Panc1 (cell line): ENCODE measurements at regions of chr11 and their contacts with region 1.

Region 1: DNA sequence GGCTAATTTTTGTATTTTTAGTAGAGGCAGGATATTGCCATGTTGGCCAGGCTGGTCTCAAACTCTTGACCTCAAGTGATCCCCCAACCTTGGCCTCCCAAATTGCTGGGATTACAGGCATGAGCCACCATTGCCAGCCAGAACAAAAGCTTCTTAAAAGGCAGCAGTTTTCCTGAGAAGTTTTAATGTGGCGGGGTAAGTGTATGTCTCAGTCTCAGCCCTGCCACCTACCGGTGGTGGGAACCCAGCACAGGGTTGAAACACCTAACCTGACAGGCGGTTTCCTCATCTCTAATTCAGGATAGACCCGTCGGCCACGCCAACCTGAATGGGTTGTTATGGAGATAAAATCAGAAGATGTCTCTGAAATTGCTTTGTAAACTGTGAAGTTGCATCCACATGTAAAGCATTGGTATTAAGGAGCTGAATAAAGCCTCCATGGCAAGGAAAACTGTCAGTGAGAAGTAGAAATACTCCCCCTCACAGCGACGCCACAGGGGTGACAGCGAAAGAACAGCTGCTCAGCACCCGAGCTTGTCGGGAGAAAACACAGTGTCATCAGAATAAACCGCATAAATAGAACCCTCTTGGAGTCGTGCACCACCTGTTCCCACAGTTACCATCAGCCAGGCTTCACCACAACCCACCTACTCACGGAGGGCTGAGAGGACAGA is 165.9 kb upstream of the NCAM1 start:
- DNase-seq: peak; percentile 17
- ATAC-seq: peak; percentile 93
- H3K4me3 ChIP-seq: no peak overlapping the region
- H3K27ac ChIP-seq: no peak overlapping the region
- H3K4me1 ChIP-seq: no peaks in the 10 kb centered on the region
- H3K27me3 ChIP-seq: peaks cover 10% of the 10 kb centered on the region; the same call in 1 of the 2 replicates
- CTCF ChIP-seq: peak; percentile 91

Region 2: GRCh38 chr11:111148121-111148520 is 1647.2 kb before region 1 on chr11:
- CTCF ChIA-PET with region 1: no interaction called
- POLR2A ChIA-PET with region 1: interaction called, 12 read pairs
- in situ Hi-C with region 1: no loop called
- intact Hi-C with region 1: no loop called
- DNase-seq: no peak
- ATAC-seq: no peak
- H3K4me3 ChIP-seq: no peak overlapping the region
- H3K27ac ChIP-seq: no peak overlapping the region
- H3K4me1 ChIP-seq: no peaks in the 10 kb centered on the region
- H3K27me3 ChIP-seq: no peaks in the 10 kb centered on the region
- CTCF ChIP-seq: no peak

Region 3: DNA sequence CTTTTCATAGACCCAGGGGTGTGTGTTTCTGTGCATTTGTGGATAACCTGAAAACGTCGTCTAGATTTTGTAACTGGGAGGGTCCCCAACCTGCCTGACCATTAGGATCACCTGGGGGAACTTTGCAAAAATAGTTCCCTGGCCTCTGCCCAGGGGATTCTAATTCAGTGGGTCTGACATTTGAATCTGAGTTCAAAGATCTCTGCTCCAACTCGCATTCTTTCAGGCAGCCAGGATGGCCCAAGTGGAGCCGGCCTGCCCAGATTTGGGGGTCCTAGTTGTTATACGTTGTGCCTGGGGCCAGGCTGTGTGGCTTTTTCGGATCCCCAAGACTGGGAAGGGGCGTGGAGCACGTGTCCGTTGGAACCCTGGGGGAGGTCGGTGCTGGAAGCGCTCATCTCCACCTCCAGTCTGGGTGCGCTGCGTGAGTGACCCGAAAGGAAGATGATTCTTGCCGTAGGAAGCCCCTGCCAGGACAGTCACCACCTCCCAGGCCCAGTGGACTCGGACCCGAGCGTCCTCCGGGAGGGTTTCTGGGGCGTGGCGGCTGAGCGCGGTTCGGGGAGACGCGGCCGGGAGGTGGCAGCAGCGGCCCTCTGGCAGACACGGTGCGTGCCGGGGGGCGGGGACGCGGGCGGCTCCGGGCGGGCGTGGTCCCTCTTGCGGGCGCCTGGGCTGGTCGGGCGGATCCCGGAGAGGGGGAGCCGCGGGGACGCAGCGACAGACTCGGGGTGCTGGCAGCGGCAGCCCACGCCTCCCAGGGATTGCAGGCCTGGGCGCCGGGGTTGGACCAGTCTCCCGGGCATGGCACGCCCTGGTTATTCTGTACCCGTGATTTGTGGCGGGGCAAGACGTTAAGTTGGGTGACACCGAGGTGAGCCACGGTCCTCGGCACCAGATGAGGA is 505.4 kb before region 1 on chr11:
- CTCF ChIA-PET with region 1: interaction called, 4 read pairs
- POLR2A ChIA-PET with region 1: no interaction called
- in situ Hi-C with region 1: no loop called
- intact Hi-C with region 1: loop called (anchors 10 kb)
- DNase-seq: no peak
- ATAC-seq: peak; percentile 98
- H3K4me3 ChIP-seq: peak overlapping the region; percentile 59 to 61
- H3K27ac ChIP-seq: peak overlapping the region; percentile 75
- H3K4me1 ChIP-seq: peaks cover 8% of the 10 kb centered on the region
- H3K27me3 ChIP-seq: 0 out of 2 replicates have a peak, but pooled peaks cover 2% of the 10 kb centered on the region
- CTCF ChIP-seq: peak; percentile 99

Region 4: GRCh38 chr11:112588252-112588694 is 207.0 kb before region 1 on chr11:
- CTCF ChIA-PET with region 1: interaction called, 9 read pairs
- POLR2A ChIA-PET with region 1: no interaction called
- in situ Hi-C with region 1: no loop called
- intact Hi-C with region 1: loop called (anchors 2 kb)
- DNase-seq: peak; percentile 46
- ATAC-seq: peak; percentile 93
- H3K4me3 ChIP-seq: no peak overlapping the region
- H3K27ac ChIP-seq: no peak overlapping the region
- H3K4me1 ChIP-seq: no peaks in the 10 kb centered on the region
- H3K27me3 ChIP-seq: 0 out of 2 replicates have a peak, but pooled peaks cover 3% of the 10 kb centered on the region
- CTCF ChIP-seq: peak; percentile 84

Region 5: DNA sequence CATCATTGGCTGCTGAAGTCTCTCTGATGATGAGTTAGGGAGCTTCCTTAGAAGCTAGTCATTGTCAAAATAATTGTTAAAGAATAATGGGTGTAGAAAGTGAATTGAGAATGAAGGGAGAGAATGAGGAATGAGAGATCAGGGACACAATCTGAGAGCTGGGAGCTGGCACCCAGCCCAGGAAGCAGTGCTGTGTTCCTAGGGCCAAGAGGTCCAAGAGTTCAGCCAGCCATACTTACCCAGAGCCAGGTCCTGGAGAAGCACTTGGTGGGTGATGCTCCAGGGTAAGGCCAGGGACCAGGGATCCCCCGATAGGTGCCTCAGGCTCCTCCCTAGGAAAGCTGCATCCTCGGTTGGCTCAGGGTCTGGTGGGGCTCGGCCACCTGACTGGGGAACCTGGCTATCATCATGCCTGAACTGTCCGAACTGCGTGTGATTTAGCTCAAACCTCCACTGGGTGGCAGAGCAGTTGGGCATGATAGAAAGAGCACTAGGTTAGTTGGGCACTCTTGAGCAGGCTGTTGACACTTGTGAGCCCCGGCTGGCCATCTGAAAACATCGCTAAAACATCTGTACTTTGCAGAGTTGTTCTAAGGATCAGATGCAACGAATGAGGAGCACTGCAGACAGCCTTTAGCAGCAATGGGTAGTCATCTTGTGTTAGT is 42.0 kb after region 1 on chr11:
- CTCF ChIA-PET with region 1: no interaction called
- POLR2A ChIA-PET with region 1: no interaction called
- in situ Hi-C with region 1: no loop called
- intact Hi-C with region 1: no loop called
- DNase-seq: no peak
- ATAC-seq: no peak
- H3K4me3 ChIP-seq: no peak overlapping the region
- H3K27ac ChIP-seq: no peak overlapping the region
- H3K4me1 ChIP-seq: no peaks in the 10 kb centered on the region
- H3K27me3 ChIP-seq: no peaks in the 10 kb centered on the region; the same call in 1 of the 2 replicates
- CTCF ChIP-seq: 0 out of 2 replicates have a peak, but pooled peaks have one; percentile 35

Region 6: GRCh38 chr11:113289431-113290187 is 494.3 kb after region 1 on chr11:
- CTCF ChIA-PET with region 1: interaction called, 4 read pairs
- POLR2A ChIA-PET with region 1: no interaction called
- in situ Hi-C with region 1: no loop called
- intact Hi-C with region 1: loop called (anchors 5 kb)
- DNase-seq: peak; percentile 53
- ATAC-seq: peak; percentile 89
- H3K4me3 ChIP-seq: no peak overlapping the region
- H3K27ac ChIP-seq: no peak overlapping the region
- H3K4me1 ChIP-seq: no peaks in the 10 kb centered on the region
- H3K27me3 ChIP-seq: no peaks in the 10 kb centered on the region; the same call in 1 of the 2 replicates
- CTCF ChIP-seq: peak; percentile 96